Mammary epithelial cell (primary cell): ENCODE measurements at regions of chr9 and their contacts with region 1.

Region 1: DNA sequence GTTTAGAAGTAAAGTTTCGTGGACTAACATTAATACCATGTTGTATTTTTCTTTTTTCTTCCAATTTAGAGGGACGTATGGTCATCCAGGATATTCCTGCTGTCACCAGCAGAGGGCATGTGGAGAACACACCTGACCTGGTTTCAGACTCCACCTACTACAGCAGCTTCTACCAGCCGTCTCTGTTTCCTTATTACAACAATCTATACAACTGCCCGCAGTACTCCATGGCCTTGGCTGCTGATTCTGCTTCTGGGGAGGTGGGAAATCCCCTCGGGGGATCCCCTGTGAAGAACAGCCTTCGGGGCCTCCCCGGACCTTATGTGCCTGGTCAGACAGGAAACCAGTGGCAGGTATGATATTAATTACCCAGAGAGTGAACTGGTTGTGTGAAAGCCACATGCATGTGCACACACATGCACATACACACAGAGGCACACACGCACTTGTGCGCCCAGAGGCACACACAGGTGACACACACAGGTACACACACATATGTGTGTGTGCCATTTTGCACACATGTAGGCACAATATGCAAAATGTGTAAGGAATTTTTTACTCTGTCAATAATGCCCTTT is 52.4 kb downstream of the DMRT1 start:
- DNase-seq: peak; percentile 54
- H3K4me3 ChIP-seq: no peak overlapping the region
- H3K27ac ChIP-seq: no peak overlapping the region
- H3K4me1 ChIP-seq: no peaks in the 10 kb centered on the region
- H3K27me3 ChIP-seq: no peaks in the 10 kb centered on the region
- CTCF ChIP-seq: peak; percentile 81 to 86

Region 2: DNA sequence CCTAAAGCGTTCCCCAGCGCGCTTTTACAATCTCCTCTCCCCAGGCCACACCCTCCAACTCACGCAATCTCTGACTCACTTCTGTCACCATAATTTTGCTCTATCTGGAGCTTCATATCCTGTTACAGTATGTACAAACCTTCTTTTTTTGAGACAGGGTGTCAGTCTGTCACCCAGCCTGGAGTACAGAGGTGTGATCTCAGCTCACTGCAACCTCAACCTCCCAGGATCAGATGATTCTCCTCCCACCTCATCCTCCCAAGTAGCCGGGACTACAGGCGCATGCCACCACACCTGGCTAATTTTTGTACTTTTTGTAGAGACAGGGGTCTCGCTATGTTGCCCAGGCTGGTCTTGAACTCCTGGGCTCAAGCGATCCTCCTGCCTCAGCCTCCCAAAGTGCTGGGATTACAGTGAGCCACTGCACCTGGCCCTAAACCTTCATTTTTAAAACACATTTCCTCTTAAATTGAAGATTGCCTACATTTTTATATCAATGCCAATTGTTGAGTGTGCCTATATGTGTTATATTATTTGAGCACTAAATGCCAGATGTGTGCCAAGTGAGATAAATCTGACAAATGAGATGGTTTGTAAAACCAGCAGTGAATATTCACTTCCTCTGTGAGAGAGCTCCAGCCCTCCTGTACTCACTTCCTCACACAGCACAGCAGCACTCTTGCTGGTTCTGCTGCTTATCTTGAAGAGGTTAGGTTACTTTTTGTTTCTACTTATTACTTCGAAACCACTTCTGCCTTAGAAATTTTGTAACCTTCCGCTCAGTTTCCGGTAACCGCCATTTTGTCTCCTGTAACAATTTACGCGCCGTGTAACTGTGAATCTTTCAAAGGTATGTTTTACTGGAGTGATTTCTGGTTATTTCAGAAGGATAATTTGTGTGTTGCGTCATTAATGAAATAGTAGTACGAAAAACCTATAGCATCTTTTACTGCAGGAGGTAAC is 621.4 kb before region 1 on chr9:
- CTCF ChIA-PET with region 1: no interaction called
- dilution Hi-C with region 1: no loop called
- in situ Hi-C with region 1: no loop called
- intact Hi-C with region 1: no loop called
- DNase-seq: no peak
- H3K4me3 ChIP-seq: no peak overlapping the region
- H3K27ac ChIP-seq: no peak overlapping the region
- H3K4me1 ChIP-seq: no peaks in the 10 kb centered on the region
- H3K27me3 ChIP-seq: peaks cover 2% of the 10 kb centered on the region
- CTCF ChIP-seq: no peak

Region 3: DNA sequence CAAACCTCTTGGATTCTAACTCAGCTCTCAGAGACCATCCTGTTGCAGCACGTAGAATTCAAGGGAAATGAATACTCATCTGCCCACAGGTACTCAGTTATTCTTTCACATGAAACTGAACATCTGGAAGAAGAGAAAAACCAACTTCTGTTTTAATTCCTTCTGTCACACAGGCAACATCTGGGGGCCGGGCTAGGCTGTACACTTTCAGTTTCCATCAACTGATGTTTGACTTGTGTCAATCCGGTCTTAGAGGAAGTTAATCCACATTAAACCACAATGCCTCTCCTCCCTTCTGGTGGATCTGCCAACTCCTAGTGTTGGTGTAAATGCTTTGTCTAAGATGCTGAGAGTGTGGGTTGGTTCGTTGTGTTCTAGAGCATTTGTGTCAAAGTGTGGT is 100.1 kb after region 1 on chr9:
- CTCF ChIA-PET with region 1: no interaction called
- dilution Hi-C with region 1: no loop called
- in situ Hi-C with region 1: no loop called
- intact Hi-C with region 1: loop called (anchors 2 kb)
- DNase-seq: no peak
- H3K4me3 ChIP-seq: no peak overlapping the region
- H3K27ac ChIP-seq: no peak overlapping the region
- H3K4me1 ChIP-seq: no peaks in the 10 kb centered on the region
- H3K27me3 ChIP-seq: no peaks in the 10 kb centered on the region
- CTCF ChIP-seq: no peak

Region 4: DNA sequence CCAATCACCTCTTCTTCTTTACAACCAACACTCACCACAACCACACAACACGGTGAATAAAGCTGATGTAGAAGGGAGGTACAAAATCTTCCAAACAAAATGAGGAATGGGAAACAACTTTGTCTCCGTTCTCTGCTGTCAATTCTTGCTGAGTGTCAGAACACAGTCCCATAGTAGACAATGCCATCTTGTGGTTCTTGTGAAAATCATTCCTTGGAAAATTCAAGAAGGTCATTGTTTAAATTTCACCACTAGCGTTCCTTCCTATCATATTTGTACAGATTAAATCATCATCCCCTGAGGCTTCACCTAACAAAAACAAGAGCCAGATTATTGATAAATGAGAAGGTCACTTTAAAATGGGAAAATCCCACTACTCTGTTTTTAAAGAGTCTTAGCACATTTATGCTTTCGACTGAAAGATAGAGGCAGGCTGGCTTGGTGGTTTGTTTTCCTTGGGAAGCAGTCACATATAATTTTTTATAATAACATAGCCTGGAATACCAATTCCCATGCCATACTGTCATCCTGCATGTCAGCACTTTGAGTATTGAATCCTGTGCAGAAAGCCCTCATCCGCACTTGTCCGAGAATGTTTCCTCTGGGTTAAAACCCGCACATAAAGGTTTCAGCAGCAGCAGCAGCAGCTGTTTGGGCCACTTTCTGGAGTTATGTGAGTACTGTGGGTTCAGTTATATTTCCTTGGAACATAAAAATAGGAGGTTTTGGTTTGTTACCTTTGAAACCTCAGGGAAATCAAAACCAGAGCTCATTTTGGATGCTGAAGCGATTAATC is 726.2 kb after region 1 on chr9:
- CTCF ChIA-PET with region 1: no interaction called
- dilution Hi-C with region 1: no loop called
- in situ Hi-C with region 1: no loop called
- intact Hi-C with region 1: loop called (anchors 5 kb)
- DNase-seq: peak; percentile 8
- H3K4me3 ChIP-seq: no peak overlapping the region
- H3K27ac ChIP-seq: no peak overlapping the region
- H3K4me1 ChIP-seq: no peaks in the 10 kb centered on the region
- H3K27me3 ChIP-seq: no peaks in the 10 kb centered on the region
- CTCF ChIP-seq: peak; percentile 6 to 47

Region 5: GRCh38 chr9:2087500-2088313 is 1193.8 kb after region 1 on chr9:
- CTCF ChIA-PET with region 1: no interaction called
- dilution Hi-C with region 1: no loop called
- in situ Hi-C with region 1: no loop called
- intact Hi-C with region 1: loop called (anchors 5 kb)
- DNase-seq: peak; percentile 50
- H3K4me3 ChIP-seq: no peak overlapping the region
- H3K27ac ChIP-seq: no peak overlapping the region
- H3K4me1 ChIP-seq: no peaks in the 10 kb centered on the region
- H3K27me3 ChIP-seq: no peaks in the 10 kb centered on the region
- CTCF ChIP-seq: peak; percentile 67 to 77